ENCODE measurements at regions of chr1 and their contacts with region 1.

Region 1: GRCh38 chr1:183209533-183210158 is 23.6 kb downstream of the LAMC2 start:
- DNase-seq: peak; percentile 96
- H3K4me3 Mint-ChIP-seq: no peak overlapping the region
- H3K27ac Mint-ChIP-seq: peak overlapping the region; percentile 94
- H3K4me1 Mint-ChIP-seq: peaks cover 46% of the 10 kb centered on the region
- H3K27me3 Mint-ChIP-seq: no peaks in the 10 kb centered on the region
- CTCF ChIP-seq: no peak

Region 2: GRCh38 chr1:182869241-182869666 is 340.4 kb before region 1 on chr1:
- CTCF ChIA-PET with region 1: no interaction called
- POLR2A ChIA-PET with region 1: no interaction called
- intact Hi-C with region 1: no loop called
- DNase-seq: no peak
- H3K4me3 Mint-ChIP-seq: no peak overlapping the region
- H3K27ac Mint-ChIP-seq: peak overlapping the region; percentile 35
- H3K4me1 Mint-ChIP-seq: no peaks in the 10 kb centered on the region
- H3K27me3 Mint-ChIP-seq: no peaks in the 10 kb centered on the region
- CTCF ChIP-seq: no peak

Region 3: DNA sequence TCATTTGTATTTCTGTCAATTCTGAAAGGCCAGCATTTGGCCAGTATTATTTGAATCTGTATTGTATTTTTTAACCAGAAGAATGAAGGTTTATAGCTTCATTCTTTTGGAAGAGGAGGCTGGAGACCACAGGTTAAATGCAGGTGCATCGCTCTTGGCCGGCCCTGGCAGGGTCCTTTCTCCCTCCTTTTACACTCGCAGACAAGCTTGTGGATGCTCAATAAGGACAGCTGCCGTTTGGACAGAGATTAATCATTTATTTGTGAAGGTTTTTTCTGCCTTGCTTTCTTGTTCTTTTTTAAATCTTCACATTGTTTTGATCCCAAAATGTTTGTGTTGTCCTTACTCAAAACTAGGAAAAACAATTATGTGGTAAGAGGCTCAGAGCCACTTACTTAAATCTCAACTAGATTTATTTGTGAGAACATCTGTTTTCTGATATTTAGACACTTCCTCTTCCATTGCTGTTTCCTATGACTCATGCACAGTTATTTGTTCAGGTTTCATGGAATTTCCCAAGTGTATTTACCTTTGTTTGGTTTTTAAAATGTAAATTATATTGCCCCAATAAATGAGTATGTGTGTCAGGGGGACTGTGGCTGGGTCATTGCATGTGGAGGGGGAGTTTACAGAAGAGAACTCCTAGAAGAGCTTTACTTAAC is 70.2 kb before region 1 on chr1:
- CTCF ChIA-PET with region 1: no interaction called
- POLR2A ChIA-PET with region 1: interaction called, 14 read pairs
- intact Hi-C with region 1: no loop called
- DNase-seq: peak; percentile 81
- H3K4me3 Mint-ChIP-seq: peak overlapping the region; percentile 1
- H3K27ac Mint-ChIP-seq: peak overlapping the region; percentile 99
- H3K4me1 Mint-ChIP-seq: peaks cover 27% of the 10 kb centered on the region
- H3K27me3 Mint-ChIP-seq: no peaks in the 10 kb centered on the region
- CTCF ChIP-seq: no peak

Region 4: GRCh38 chr1:183159960-183160359 is 49.7 kb before region 1 on chr1:
- CTCF ChIA-PET with region 1: interaction called, 9 read pairs
- POLR2A ChIA-PET with region 1: interaction called, 34 read pairs
- intact Hi-C with region 1: no loop called
- DNase-seq: peak; percentile 99
- H3K4me3 Mint-ChIP-seq: peak overlapping the region; percentile 48
- H3K27ac Mint-ChIP-seq: no peak overlapping the region
- H3K4me1 Mint-ChIP-seq: peaks cover 27% of the 10 kb centered on the region
- H3K27me3 Mint-ChIP-seq: no peaks in the 10 kb centered on the region
- CTCF ChIP-seq: no peak

Region 5: DNA sequence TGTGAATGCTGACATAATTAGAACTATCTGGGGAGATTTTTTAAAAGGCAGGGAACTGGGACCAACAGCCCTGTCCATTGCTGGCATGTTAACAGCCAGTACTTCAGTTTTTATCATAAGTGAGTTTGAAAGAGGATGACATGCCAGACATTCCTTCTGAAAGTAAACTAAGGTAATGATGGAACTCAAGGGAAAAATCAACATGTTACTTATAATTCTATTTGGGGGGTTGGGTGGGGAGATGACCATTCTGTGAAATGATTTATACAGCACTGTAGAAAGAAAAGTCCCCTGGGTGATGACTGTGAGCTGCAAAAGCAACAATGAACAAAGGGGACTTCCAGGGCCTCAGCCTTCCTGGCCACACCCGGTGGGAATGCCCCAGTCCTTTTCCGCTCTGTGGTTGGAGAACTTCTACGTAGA is 29.0 kb before region 1 on chr1:
- CTCF ChIA-PET with region 1: interaction called, 9 read pairs
- POLR2A ChIA-PET with region 1: interaction called, 151 read pairs
- intact Hi-C with region 1: no loop called
- DNase-seq: peak; percentile 87
- H3K4me3 Mint-ChIP-seq: peak overlapping the region; percentile 23
- H3K27ac Mint-ChIP-seq: peak overlapping the region; percentile 96
- H3K4me1 Mint-ChIP-seq: peaks cover 42% of the 10 kb centered on the region
- H3K27me3 Mint-ChIP-seq: no peaks in the 10 kb centered on the region
- CTCF ChIP-seq: no peak

Region 6: DNA sequence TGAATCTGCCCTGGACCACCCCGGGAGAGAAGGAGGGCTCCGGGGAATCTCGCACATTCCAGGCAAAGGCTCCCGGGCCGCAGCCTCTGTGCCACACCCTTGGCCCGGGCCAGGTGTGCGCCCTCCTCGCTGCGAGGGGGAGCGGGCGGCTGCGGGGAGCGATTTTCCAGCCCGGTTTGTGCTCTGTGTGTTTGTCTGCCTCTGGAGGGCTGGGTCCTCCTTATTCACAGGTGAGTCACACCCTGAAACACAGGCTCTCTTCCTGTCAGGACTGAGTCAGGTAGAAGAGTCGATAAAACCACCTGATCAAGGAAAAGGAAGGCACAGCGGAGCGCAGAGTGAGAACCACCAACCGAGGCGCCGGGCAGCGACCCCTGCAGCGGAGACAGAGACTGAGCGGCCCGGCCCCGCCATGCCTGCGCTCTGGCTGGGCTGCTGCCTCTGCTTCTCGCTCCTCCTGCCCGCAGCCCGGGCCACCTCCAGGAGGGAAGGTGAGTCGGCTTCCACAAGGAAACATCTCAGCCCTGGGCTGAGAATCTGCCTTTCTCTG is 23.6 kb before region 1 on chr1 and contains the start of gene LAMC2:
- CTCF ChIA-PET with region 1: interaction called, 9 read pairs
- POLR2A ChIA-PET with region 1: interaction called, 151 read pairs
- intact Hi-C with region 1: loop called (anchors 1 kb)
- DNase-seq: peak; percentile 98
- H3K4me3 Mint-ChIP-seq: peak within 1 kb of the TSS; percentile 92
- H3K27ac Mint-ChIP-seq: peak within 1 kb of the TSS; percentile 98
- H3K4me1 Mint-ChIP-seq: peaks cover 36% of the 10 kb centered on the region
- H3K27me3 Mint-ChIP-seq: no peaks in the 10 kb centered on the region
- CTCF ChIP-seq: peak; percentile 70
- total RNA-seq, gene LAMC2: 751 and 884 TPM in 2 replicates

Region 7: GRCh38 chr1:183195142-183195574 is 14.5 kb before region 1 on chr1:
- CTCF ChIA-PET with region 1: interaction called, 4 read pairs
- POLR2A ChIA-PET with region 1: interaction called, 151 read pairs
- intact Hi-C with region 1: loop called (anchors 1 kb)
- DNase-seq: peak; percentile 62
- H3K4me3 Mint-ChIP-seq: no peak overlapping the region
- H3K27ac Mint-ChIP-seq: peak overlapping the region; percentile 87
- H3K4me1 Mint-ChIP-seq: peaks cover 56% of the 10 kb centered on the region
- H3K27me3 Mint-ChIP-seq: no peaks in the 10 kb centered on the region
- CTCF ChIP-seq: no peak